CD4-positive, alpha-beta memory T cell (primary cell): ENCODE measurements at regions of chr22 and their contacts with region 1.

Region 1: DNA sequence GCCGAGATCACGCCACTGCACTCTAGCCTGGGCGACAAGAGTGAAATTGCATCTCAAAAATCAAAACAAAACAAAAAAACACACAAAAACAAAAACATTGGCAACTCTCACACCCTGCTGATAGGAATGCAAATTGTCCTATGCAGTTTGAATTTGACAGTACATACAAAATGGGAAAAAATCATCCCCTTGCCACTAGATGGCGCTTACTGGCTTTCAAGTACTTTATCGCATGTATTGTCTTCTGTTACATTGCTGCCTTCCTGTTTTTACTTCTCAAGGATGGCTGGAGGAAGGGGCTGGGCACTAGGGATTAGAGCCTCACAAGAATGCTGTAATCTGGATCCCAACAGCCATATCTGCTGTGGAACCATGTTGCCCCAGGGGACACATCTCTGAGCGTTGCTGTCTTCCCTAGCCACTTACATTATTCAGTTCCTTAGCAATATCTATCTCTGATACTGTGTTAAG is 59.4 kb upstream of the A4GALT start:
- DNase-seq: peak; percentile 59 to 65 (median 62)
- H3K4me3 ChIP-seq: no peak overlapping the region
- H3K4me3 Mint-ChIP-seq: no peak overlapping the region
- H3K27ac ChIP-seq: no peak overlapping the region
- H3K27ac Mint-ChIP-seq: no peak overlapping the region
- H3K4me1 ChIP-seq: no peaks in the 10 kb centered on the region
- H3K4me1 Mint-ChIP-seq: no peaks in the 10 kb centered on the region
- H3K27me3 ChIP-seq: no peaks in the 10 kb centered on the region
- H3K27me3 Mint-ChIP-seq: no peaks in the 10 kb centered on the region

Region 2: DNA sequence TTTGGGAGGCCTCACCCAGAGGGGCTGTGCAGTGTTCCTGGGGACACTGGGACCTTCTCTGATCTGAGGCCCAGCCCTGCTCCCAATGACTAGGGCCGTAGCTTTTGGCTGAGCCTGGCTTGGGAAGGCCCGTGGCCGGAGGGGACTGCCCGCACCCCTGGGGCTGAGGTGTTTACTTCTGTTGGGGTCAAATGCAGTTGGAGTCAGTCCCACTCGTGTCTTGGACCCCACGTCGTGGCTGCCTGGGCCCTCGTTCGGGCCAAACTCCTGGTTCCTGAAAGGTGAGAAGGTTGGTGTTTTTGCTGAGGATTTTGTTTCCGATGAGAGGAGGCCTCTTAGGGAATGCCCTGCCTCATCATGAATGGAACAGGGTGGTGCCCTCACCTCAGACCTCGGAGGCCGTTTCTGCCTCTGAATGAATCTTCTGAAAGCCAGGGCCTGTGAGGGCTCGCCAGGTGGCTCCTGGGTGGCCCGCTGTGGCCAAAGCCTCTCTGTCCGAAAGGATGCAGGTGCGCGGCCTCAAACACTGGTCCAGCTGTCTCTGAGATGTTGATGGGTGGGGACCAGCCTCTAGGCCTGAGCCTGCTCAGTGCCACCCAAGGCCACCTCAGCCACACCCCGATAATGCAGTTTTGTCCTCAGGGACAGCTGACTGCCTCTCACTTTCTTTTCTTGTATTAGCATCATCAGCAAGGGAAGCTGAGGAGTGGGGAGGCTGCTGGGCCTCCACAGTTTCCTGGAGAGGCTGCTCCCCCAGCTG is 19.1 kb before region 1 on chr22:
- CTCF ChIA-PET with region 1: no interaction called
- POLR2A ChIA-PET with region 1: no interaction called
- intact Hi-C with region 1: no loop called
- DNase-seq: no peak
- H3K4me3 ChIP-seq: no peak overlapping the region
- H3K4me3 Mint-ChIP-seq: no peak overlapping the region
- H3K27ac ChIP-seq: no peak overlapping the region
- H3K27ac Mint-ChIP-seq: no peak overlapping the region
- H3K4me1 ChIP-seq: no peaks in the 10 kb centered on the region
- H3K4me1 Mint-ChIP-seq: no peaks in the 10 kb centered on the region
- H3K27me3 ChIP-seq: no peaks in the 10 kb centered on the region
- H3K27me3 Mint-ChIP-seq: peaks cover 5 to 6% of the 10 kb centered on the region in 2 donors

Region 3: DNA sequence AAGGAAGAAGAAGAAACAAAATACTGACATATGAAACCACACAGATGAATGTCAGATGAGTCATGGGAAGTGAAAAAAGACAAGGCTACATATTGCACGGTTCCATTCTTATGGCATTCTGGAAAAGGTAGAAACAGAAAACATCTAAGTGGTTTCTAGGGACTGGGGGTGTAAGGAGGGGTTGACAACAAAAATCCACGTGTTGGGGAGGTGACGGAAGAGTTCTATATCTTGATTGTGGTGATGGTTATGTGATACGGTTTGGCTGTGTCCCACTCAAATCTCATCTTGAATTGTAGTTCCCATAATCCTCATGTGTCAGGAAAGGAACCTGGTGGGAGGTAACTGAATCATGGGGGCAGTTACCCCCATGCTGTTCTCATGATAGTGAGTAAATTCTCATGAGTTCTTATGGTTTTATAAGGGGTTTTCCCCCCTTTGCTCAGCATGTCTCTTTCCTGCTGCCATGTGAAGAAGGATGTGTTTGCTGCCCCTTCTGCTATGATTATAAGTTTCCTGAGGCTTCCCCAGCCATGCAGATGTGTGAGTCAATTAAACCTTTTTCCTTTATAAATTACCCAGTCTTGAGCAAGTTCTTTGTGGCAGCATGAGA is 83.3 kb after region 1 on chr22:
- CTCF ChIA-PET with region 1: interaction called, 6 read pairs
- POLR2A ChIA-PET with region 1: no interaction called
- intact Hi-C with region 1: loop called (anchors 1 kb)
- DNase-seq: peak in 1 of 5 donors; percentile 21
- H3K4me3 ChIP-seq: no peak overlapping the region
- H3K4me3 Mint-ChIP-seq: peak overlapping the region in 1 of 8 donors; percentile 53
- H3K27ac ChIP-seq: no peak overlapping the region
- H3K27ac Mint-ChIP-seq: peak overlapping the region in 4 of 7 donors; percentile 2 to 48 (median 29)
- H3K4me1 ChIP-seq: peaks cover 5% of the 10 kb centered on the region
- H3K4me1 Mint-ChIP-seq: peaks cover 3 to 14% (median 10%) of the 10 kb centered on the region in 4 donors
- H3K27me3 ChIP-seq: no peaks in the 10 kb centered on the region
- H3K27me3 Mint-ChIP-seq: no peaks in the 10 kb centered on the region

Region 4: DNA sequence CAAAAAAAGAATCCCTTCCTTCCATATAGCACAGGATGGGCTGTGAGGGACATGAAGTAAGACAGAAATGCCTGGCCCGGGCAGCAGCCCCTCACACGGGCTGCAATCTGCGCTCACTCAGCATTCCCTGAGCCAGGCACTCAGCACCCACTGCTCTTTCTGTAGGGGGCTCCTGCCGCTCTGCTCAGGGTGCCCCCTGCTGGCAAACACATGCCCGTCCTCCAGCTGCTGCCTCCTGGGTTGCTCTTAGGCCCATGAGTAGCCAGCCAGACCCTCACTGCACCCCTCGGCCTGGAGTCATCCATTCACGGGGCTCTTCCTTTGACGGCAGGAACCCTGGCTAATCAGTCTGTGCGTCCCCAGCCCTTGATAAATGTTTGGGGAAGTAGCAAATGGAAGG is 356.1 kb after region 1 on chr22:
- CTCF ChIA-PET with region 1: no interaction called
- POLR2A ChIA-PET with region 1: no interaction called
- intact Hi-C with region 1: loop called (anchors 1 kb)
- DNase-seq: peak in 4 of 5 donors; percentile 14 to 25 (median 22)
- H3K4me3 ChIP-seq: no peak overlapping the region
- H3K4me3 Mint-ChIP-seq: no peak overlapping the region
- H3K27ac ChIP-seq: no peak overlapping the region
- H3K27ac Mint-ChIP-seq: peak overlapping the region in 1 of 7 donors; percentile 47
- H3K4me1 ChIP-seq: peaks cover 4% of the 10 kb centered on the region
- H3K4me1 Mint-ChIP-seq: peaks cover 0 to 6% (median 3%) of the 10 kb centered on the region in 4 donors
- H3K27me3 ChIP-seq: no peaks in the 10 kb centered on the region
- H3K27me3 Mint-ChIP-seq: no peaks in the 10 kb centered on the region